CD8-positive, alpha-beta T cell (primary cell): ENCODE measurements at regions of chr6 and their contacts with region 1.

Region 1: DNA sequence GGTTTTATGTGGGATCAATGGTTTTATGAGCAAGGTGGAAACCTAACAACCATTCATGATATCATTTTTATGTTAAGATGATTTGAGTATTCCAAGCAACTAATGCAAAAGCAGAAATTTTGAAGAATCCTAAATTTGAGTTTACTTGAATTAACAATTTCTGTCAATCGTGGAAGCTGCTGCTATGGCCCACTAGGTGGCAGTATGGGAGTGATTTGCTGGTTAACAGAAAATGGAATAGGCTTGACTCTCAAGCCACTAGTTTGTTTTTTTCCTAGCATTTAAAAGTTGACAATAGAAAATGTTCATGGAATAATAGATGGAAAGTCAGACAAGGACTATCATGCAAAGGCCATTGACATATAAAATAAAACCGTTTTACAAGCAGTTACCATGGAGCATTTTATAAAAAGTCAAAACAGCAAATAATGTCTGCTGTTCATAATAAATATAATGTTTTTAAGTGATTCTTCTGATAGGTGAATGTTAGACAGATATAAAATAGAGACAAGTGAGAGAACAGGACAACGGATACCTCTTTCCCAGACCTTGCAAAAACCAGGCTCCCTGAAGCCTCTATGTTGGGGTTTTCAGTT is 43.0 kb upstream of the TMEM200A start:
- DNase-seq: peak in 8 of 9 experiments; percentile 31 to 81 (median 58)
- ATAC-seq: peak; percentile 42
- H3K4me3 ChIP-seq: no peak overlapping the region
- H3K4me3 Mint-ChIP-seq: no peak overlapping the region
- H3K27ac ChIP-seq: no peak overlapping the region
- H3K27ac Mint-ChIP-seq: no peak overlapping the region
- H3K4me1 ChIP-seq: no peaks in the 10 kb centered on the region
- H3K4me1 Mint-ChIP-seq: peaks cover 2% of the 10 kb centered on the region
- H3K27me3 ChIP-seq: no peaks in the 10 kb centered on the region
- H3K27me3 Mint-ChIP-seq: no peaks in the 10 kb centered on the region
- CTCF ChIP-seq: peak; percentile 92

Region 2: DNA sequence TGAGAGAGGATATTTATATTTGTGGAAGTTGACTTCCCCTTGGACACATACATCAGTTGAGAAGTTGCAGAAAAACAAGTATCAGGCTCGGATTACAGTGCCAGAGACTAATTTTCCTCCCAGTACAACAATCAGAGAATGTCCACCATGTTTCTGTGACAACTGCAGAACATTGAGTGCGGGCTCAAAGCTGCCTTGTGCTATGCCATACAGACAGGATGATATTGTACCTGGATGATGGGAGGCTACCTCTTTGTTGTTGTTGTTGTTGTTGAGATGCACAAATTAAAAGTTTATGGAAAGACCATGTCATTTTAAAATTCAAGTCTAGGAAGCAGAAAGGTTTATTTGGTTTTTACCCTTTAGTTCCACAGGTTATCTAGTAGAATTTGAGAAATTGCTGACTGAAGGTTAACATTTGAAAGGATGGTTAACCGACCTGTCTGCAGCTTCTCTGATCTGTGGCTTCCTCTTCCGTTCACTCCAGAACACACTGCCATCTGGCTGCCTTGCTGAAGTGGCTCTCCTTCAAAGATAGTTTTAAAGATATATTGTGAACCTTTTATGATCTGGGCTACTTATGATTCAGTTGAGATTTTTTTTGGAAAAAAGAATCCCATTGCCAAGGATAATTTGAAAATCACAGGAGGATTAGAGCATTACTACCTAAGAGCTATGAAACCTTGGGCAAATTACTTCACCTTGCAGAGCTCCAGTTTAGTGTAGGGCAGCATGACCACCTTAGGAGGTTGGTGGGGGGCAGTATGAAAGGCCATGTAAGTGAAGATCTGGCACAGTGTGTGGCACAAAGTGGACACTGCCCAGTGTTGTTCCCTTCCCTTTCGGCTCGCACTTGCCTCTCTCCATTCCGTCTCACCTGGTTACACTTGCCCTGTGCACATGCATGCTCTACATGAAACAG is 58.9 kb after region 1 on chr6:
- CTCF ChIA-PET with region 1: interaction called, 8 read pairs
- POLR2A ChIA-PET with region 1: no interaction called
- intact Hi-C with region 1: loop called (anchors 1 to 2 kb)
- DNase-seq: peak in 5 of 9 experiments; percentile 30 to 71 (median 51)
- ATAC-seq: peak; percentile 81
- H3K4me3 ChIP-seq: no peak overlapping the region
- H3K4me3 Mint-ChIP-seq: no peak overlapping the region
- H3K27ac ChIP-seq: no peak overlapping the region
- H3K27ac Mint-ChIP-seq: no peak overlapping the region
- H3K4me1 ChIP-seq: peaks cover 16% of the 10 kb centered on the region
- H3K4me1 Mint-ChIP-seq: peaks cover 18% of the 10 kb centered on the region
- H3K27me3 ChIP-seq: no peaks in the 10 kb centered on the region
- H3K27me3 Mint-ChIP-seq: no peaks in the 10 kb centered on the region
- CTCF ChIP-seq: peak; percentile 26

Region 3: DNA sequence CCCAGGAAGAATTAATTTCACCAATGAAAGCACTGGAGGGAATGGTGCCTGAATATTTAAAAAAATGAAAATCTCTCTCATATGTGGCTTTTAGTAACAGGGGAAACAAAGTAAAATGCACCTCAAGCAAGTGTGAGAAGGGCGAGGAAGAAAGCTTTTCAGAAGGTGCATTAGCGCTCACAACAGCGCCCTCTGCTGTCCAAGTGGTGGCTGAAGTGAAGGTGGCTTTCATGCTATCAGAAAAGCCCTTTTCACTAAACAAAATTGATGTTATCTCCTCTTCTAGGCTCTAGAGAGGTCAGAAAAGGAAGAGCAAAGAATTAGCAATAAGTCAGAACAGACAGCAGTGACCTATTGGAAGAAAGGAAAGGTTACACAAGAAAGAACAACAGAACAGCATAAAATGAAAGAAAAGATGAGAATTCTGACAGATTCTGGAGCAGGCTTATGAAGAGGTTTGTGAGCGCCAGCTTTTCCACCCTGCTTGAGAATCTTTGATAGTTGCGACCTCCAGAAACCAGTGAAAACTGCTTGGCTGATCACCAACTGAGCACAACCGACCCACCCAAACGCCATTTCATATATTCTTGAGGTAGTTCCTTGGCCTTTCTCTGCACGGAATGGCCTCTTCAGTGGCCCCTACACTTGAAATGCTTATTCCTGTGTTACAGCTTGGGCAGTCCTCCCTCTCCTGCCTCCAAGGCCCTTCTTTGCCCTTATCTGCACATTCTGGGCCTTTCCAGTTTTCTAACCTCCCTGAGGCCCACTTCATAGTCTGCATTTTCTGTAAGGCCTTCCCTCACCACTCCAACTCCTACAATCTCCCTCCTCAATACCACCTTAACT is 549.7 kb after region 1 on chr6:
- CTCF ChIA-PET with region 1: interaction called, 20 read pairs
- POLR2A ChIA-PET with region 1: no interaction called
- intact Hi-C with region 1: loop called (anchors 1 kb)
- DNase-seq: peak; percentile 42 to 79 (median 71)
- ATAC-seq: peak; percentile 56
- H3K4me3 ChIP-seq: no peak overlapping the region
- H3K4me3 Mint-ChIP-seq: no peak overlapping the region
- H3K27ac ChIP-seq: no peak overlapping the region
- H3K27ac Mint-ChIP-seq: no peak overlapping the region
- H3K4me1 ChIP-seq: no peaks in the 10 kb centered on the region
- H3K4me1 Mint-ChIP-seq: peaks cover 4% of the 10 kb centered on the region
- H3K27me3 ChIP-seq: no peaks in the 10 kb centered on the region
- H3K27me3 Mint-ChIP-seq: no peaks in the 10 kb centered on the region
- CTCF ChIP-seq: peak; percentile 98